ENCODE measurements at regions of chr20 and their contacts with region 1.

Region 1: GRCh38 chr20:37758332-37758731 is 64.5 kb downstream of the CTNNBL1 start:
- DNase-seq: peak; percentile 22
- ATAC-seq: peak; percentile 17 to 37

Region 2: DNA sequence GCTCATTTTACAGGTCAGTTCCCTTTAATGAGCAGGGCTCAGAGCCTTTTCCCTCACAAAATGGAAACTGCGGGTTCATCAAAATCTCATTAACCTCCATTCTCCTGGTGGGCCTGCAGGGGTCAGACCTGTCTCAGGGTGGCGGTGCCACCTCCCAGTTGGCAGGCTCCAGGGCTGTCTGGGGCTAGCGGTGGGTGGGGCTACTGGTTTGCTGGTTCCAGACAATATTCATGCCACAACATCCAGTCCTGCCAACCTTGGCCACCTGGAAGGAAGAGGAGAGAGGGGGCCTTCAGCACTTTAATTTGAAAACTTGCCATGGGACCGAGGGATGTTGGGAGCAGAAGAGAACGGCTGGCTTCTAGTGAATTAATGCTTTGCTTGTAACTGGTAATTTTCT is 106.4 kb before region 1 on chr20:
- intact Hi-C with region 1: loop called in 1 of 2 experiments (anchors 10 kb)
- DNase-seq: peak; percentile 62
- ATAC-seq: peak; percentile 87 to 88

Region 3: GRCh38 chr20:37901654-37902503 is 143.5 kb after region 1 on chr20:
- intact Hi-C with region 1: loop called in 1 of 2 experiments (anchors 5 kb)
- DNase-seq: no peak
- ATAC-seq: peak; percentile 50 to 61

Region 4: DNA sequence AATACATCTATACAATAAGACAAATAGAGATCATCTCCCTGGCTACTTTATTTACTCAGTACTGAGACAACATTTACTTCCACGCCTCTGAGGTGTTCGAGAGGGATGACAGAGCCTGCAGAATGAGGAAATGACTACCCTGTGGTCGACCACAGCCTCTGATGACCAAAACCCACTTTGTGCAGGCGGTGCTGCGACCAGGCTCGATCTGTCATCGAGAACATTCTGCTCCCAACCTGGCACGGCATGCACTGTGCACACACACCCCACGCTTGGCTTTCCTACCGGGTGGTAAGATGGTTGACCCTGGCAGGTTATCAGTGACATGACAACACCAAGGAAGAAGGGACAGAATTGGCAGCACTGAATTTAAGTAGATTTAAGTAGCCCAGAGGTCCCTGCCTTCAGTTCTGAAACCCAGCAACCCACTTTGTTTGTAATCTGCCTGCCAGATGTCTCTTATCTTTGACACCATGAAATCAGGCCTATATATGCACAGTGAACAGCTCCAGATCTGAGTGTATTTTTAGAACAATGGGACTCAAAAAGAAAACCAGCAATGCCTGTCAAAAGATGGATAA is 232.3 kb after region 1 on chr20:
- intact Hi-C with region 1: loop called in 1 of 2 experiments (anchors 2 kb)
- DNase-seq: peak; percentile 74
- ATAC-seq: peak; percentile 70 to 75